RWPE1 (cell line): ENCODE measurements at regions of chr9 and their contacts with region 1.

Region 1: GRCh38 chr9:35116898-35117551 is 1.4 kb upstream of the ATOSB start:
- DNase-seq: peak; percentile 91
- H3K27ac ChIP-seq: peak overlapping the region; percentile 97
- CTCF ChIP-seq: peak; percentile 100

Region 2: DNA sequence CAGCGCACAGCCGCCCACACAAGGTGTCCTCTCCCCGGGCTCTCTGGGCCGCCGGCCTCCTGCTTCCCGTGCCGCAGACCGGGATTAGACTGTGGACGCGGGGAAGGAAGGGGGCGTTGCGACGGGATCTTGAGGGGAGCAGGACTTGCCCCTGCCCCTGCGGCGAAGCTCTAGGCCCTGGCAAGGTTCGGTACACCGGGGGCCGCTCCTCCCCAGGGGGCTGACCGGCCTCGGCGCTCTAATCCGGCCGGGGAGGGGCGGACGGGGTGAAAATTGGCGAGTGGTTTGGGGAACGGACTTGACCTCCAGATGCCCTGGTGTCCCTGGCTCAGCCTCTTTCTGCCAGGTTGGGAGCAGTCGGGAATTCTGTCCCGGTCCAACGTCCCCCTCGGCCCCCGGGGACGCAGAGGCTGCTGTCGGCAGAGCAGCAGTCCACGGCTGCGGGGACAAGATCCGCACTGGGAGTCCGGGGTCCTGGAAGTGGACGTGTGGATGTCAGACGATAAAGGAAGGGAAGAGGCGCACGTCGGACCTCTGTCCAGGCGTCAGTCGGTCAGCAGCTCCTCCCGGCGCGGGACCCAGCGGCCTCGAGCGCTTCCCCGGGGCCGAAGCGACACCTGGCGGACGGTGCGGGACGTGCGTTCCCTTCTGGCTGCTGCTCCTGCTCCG is 525.6 kb before region 1 on chr9:
- CTCF ChIA-PET with region 1: no interaction called
- POLR2A ChIA-PET with region 1: no interaction called
- DNase-seq: peak; percentile 88
- H3K27ac ChIP-seq: no peak overlapping the region
- CTCF ChIP-seq: peak; percentile 99

Region 3: GRCh38 chr9:35205340-35205739 is 88.3 kb after region 1 on chr9:
- CTCF ChIA-PET with region 1: no interaction called
- POLR2A ChIA-PET with region 1: no interaction called
- DNase-seq: no peak
- H3K27ac ChIP-seq: no peak overlapping the region
- CTCF ChIP-seq: no peak

Region 4: GRCh38 chr9:35258676-35259474 is 141.8 kb after region 1 on chr9:
- CTCF ChIA-PET with region 1: interaction called, 10 read pairs
- POLR2A ChIA-PET with region 1: no interaction called
- DNase-seq: peak; percentile 32
- H3K27ac ChIP-seq: no peak overlapping the region
- CTCF ChIP-seq: peak; percentile 93

Region 5: GRCh38 chr9:35313916-35314315 is 196.9 kb after region 1 on chr9:
- CTCF ChIA-PET with region 1: no interaction called
- POLR2A ChIA-PET with region 1: no interaction called
- DNase-seq: no peak
- H3K27ac ChIP-seq: no peak overlapping the region
- CTCF ChIP-seq: no peak

Region 6: GRCh38 chr9:35478871-35479270 is 361.8 kb after region 1 on chr9:
- CTCF ChIA-PET with region 1: interaction called, 13 read pairs
- POLR2A ChIA-PET with region 1: no interaction called
- DNase-seq: no peak
- H3K27ac ChIP-seq: no peak overlapping the region
- CTCF ChIP-seq: no peak